IMR-90 (cell line): ENCODE measurements at regions of chr1 and their contacts with region 1.

Region 1: DNA sequence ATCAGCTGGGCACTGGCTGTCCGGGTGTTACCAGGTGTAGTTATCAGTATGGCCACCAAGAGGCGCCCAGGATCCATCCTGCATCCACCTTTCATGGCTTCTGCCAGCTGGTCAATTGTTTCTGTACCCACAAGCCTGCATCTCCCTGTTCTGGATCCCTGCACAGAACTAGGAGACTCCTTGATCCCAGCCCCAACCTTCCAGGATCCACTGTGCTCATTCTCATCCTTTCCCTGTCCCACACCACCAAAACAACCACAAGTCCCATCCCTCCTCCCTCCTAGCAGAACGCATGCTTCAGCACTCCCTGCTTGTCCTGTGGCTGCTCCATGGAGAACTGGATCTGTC is 27.2 kb upstream of the FOXE3 start:
- DNase-seq: peak; percentile 67
- ATAC-seq: peak; percentile 91
- H3K4me3 ChIP-seq: no peak overlapping the region
- H3K27ac ChIP-seq: no peak overlapping the region
- H3K4me1 ChIP-seq: peaks cover 2% of the 10 kb centered on the region; the same call in 1 of the 2 replicates
- H3K27me3 ChIP-seq: no peaks in the 10 kb centered on the region; the same call in 1 of the 2 replicates
- CTCF ChIP-seq: peak; percentile 90
- POLR2A ChIP-seq: no peak; the same call in 1 of the 2 replicates
- RAD21 ChIP-seq: peak; percentile 96

Region 2: GRCh38 chr1:47298025-47298699 is 90.7 kb before region 1 on chr1:
- CTCF ChIA-PET with region 1: no interaction called
- POLR2A ChIA-PET with region 1: no interaction called
- dilution Hi-C with region 1: no loop called
- in situ Hi-C with region 1: no loop called
- intact Hi-C with region 1: no loop called
- DNase-seq: no peak
- ATAC-seq: no peak
- H3K4me3 ChIP-seq: no peak overlapping the region
- H3K27ac ChIP-seq: no peak overlapping the region
- H3K4me1 ChIP-seq: peaks cover 5% of the 10 kb centered on the region; the same call in 1 of the 2 replicates
- H3K27me3 ChIP-seq: no peaks in the 10 kb centered on the region
- CTCF ChIP-seq: no peak
- POLR2A ChIP-seq: no peak
- RAD21 ChIP-seq: no peak

Region 3: GRCh38 chr1:47424336-47424982 is 35.6 kb after region 1 on chr1:
- CTCF ChIA-PET with region 1: interaction called, 12 read pairs
- POLR2A ChIA-PET with region 1: no interaction called
- dilution Hi-C with region 1: no loop called
- in situ Hi-C with region 1: loop called (anchors 5 kb)
- intact Hi-C with region 1: loop called (anchors 1 kb)
- DNase-seq: peak; percentile 67
- ATAC-seq: peak; percentile 75
- H3K4me3 ChIP-seq: no peak overlapping the region
- H3K27ac ChIP-seq: no peak overlapping the region
- H3K4me1 ChIP-seq: no peaks in the 10 kb centered on the region
- H3K27me3 ChIP-seq: peaks cover 5% of the 10 kb centered on the region; the same call in 1 of the 2 replicates
- CTCF ChIP-seq: peak; percentile 89
- POLR2A ChIP-seq: no peak
- RAD21 ChIP-seq: peak; percentile 74

Region 4: GRCh38 chr1:47710329-47711071 is 321.6 kb after region 1 on chr1:
- CTCF ChIA-PET with region 1: interaction called, 13 read pairs
- POLR2A ChIA-PET with region 1: no interaction called
- dilution Hi-C with region 1: no loop called
- in situ Hi-C with region 1: no loop called
- intact Hi-C with region 1: loop called (anchors 1 kb)
- DNase-seq: peak; percentile 37
- ATAC-seq: peak; percentile 93
- H3K4me3 ChIP-seq: no peak overlapping the region
- H3K27ac ChIP-seq: no peak overlapping the region
- H3K4me1 ChIP-seq: no peaks in the 10 kb centered on the region; the same call in 1 of the 2 replicates
- H3K27me3 ChIP-seq: peaks cover 61% of the 10 kb centered on the region
- CTCF ChIP-seq: peak; percentile 95
- POLR2A ChIP-seq: 0 out of 2 replicates have a peak, but pooled peaks have one; percentile 32
- RAD21 ChIP-seq: peak; percentile 95

Region 5: GRCh38 chr1:47725992-47726855 is 337.4 kb after region 1 on chr1:
- CTCF ChIA-PET with region 1: interaction called, 9 read pairs
- POLR2A ChIA-PET with region 1: no interaction called
- dilution Hi-C with region 1: no loop called
- in situ Hi-C with region 1: no loop called
- intact Hi-C with region 1: loop called (anchors 1 kb)
- DNase-seq: peak; percentile 63
- ATAC-seq: peak; percentile 98
- H3K4me3 ChIP-seq: no peak overlapping the region
- H3K27ac ChIP-seq: no peak overlapping the region
- H3K4me1 ChIP-seq: no peaks in the 10 kb centered on the region
- H3K27me3 ChIP-seq: peaks cover 21% of the 10 kb centered on the region
- CTCF ChIP-seq: peak; percentile 79
- POLR2A ChIP-seq: no peak
- RAD21 ChIP-seq: peak; percentile 66